Activated CD8-positive, alpha-beta T cell treated with anti-CD3 and anti-CD28 coated beads for 36 hours (primary cell): ENCODE measurements at regions of chr12 and their contacts with region 1.

Region 1: GRCh38 chr12:119115296-119115905 is 63.3 kb upstream of the HSPB8 start:
- DNase-seq: peak; percentile 43
- ATAC-seq: no peak
- H3K4me3 Mint-ChIP-seq: no peak overlapping the region
- H3K27ac Mint-ChIP-seq: no peak overlapping the region
- H3K4me1 Mint-ChIP-seq: no peaks in the 10 kb centered on the region
- H3K27me3 Mint-ChIP-seq: peaks cover 2% of the 10 kb centered on the region
- CTCF ChIP-seq: peak; percentile 60

Region 2: GRCh38 chr12:119130523-119130922 is 15.1 kb after region 1 on chr12:
- CTCF ChIA-PET with region 1: no interaction called
- POLR2A ChIA-PET with region 1: no interaction called
- intact Hi-C with region 1: no loop called
- DNase-seq: no peak
- ATAC-seq: no peak
- H3K4me3 Mint-ChIP-seq: no peak overlapping the region
- H3K27ac Mint-ChIP-seq: no peak overlapping the region
- H3K4me1 Mint-ChIP-seq: no peaks in the 10 kb centered on the region
- H3K27me3 Mint-ChIP-seq: no peaks in the 10 kb centered on the region
- CTCF ChIP-seq: no peak

Region 3: GRCh38 chr12:119412811-119413794 is 297.7 kb after region 1 on chr12:
- CTCF ChIA-PET with region 1: interaction called, 3 read pairs
- POLR2A ChIA-PET with region 1: no interaction called
- intact Hi-C with region 1: loop called (anchors 5 kb)
- DNase-seq: peak; percentile 65
- ATAC-seq: no peak
- H3K4me3 Mint-ChIP-seq: no peak overlapping the region
- H3K27ac Mint-ChIP-seq: no peak overlapping the region
- H3K4me1 Mint-ChIP-seq: no peaks in the 10 kb centered on the region
- H3K27me3 Mint-ChIP-seq: peaks cover 13% of the 10 kb centered on the region
- CTCF ChIP-seq: peak; percentile 80